OCI-LY7 (cell line): ENCODE measurements at regions of chr1 and their contacts with region 1.

Region 1: GRCh38 chr1:3618881-3619671 is 5.7 kb upstream of the TPRG1L start:
- DNase-seq: peak; percentile 77
- H3K4me3 ChIP-seq: no peak overlapping the region
- H3K27ac ChIP-seq: no peak overlapping the region
- H3K4me1 ChIP-seq: peaks cover 12% of the 10 kb centered on the region
- CTCF ChIP-seq: peak; percentile 90

Region 2: DNA sequence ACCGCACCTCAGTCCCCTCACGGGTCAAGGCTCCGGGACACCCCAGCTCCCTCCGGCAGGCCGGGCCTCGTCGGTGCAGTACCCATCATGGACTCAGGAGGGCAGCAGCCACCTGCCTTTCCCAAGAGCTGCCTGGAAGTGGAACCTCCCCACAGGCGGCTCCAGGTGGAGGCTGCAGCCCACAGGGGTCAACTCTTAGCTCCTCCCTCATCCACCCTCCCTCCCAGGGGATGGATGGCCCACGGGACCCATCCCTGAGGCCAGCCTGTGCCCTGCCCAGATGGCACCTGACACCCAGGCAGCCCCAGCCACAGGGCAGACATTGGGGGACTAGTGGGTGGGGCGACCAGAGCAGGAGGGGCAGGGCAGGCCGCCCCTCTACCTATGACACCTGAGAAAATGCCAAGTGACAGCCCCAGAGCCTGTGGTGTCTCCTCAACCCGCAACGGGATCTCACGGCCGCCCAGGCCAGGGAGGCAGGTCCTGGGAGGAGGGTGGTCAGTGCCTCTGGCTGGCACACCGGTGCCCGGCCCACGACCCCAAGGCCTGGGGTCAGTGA is 165.8 kb before region 1 on chr1:
- CTCF ChIA-PET with region 1: no interaction called
- POLR2A ChIA-PET with region 1: no interaction called
- intact Hi-C with region 1: loop called (anchors 2 kb)
- DNase-seq: peak; percentile 57
- H3K4me3 ChIP-seq: no peak overlapping the region
- H3K27ac ChIP-seq: no peak overlapping the region
- H3K4me1 ChIP-seq: no peaks in the 10 kb centered on the region
- CTCF ChIP-seq: peak; percentile 81

Region 3: GRCh38 chr1:3491291-3492246 is 127.5 kb before region 1 on chr1:
- CTCF ChIA-PET with region 1: no interaction called
- POLR2A ChIA-PET with region 1: no interaction called
- intact Hi-C with region 1: loop called (anchors 1 kb)
- DNase-seq: peak; percentile 73
- H3K4me3 ChIP-seq: peak overlapping the region; percentile 15
- H3K27ac ChIP-seq: no peak overlapping the region
- H3K4me1 ChIP-seq: no peaks in the 10 kb centered on the region
- CTCF ChIP-seq: peak; percentile 88